ENCODE measurements at regions of chr18 and their contacts with region 1.

Region 1: GRCh38 chr18:74342416-74343043 is 26.9 kb downstream of the C18orf63 start:
- DNase-seq: no peak
- H3K4me3 Mint-ChIP-seq: no peak overlapping the region
- H3K27ac Mint-ChIP-seq: no peak overlapping the region
- H3K4me1 Mint-ChIP-seq: no peaks in the 10 kb centered on the region
- H3K27me3 Mint-ChIP-seq: peaks cover 18% of the 10 kb centered on the region

Region 2: DNA sequence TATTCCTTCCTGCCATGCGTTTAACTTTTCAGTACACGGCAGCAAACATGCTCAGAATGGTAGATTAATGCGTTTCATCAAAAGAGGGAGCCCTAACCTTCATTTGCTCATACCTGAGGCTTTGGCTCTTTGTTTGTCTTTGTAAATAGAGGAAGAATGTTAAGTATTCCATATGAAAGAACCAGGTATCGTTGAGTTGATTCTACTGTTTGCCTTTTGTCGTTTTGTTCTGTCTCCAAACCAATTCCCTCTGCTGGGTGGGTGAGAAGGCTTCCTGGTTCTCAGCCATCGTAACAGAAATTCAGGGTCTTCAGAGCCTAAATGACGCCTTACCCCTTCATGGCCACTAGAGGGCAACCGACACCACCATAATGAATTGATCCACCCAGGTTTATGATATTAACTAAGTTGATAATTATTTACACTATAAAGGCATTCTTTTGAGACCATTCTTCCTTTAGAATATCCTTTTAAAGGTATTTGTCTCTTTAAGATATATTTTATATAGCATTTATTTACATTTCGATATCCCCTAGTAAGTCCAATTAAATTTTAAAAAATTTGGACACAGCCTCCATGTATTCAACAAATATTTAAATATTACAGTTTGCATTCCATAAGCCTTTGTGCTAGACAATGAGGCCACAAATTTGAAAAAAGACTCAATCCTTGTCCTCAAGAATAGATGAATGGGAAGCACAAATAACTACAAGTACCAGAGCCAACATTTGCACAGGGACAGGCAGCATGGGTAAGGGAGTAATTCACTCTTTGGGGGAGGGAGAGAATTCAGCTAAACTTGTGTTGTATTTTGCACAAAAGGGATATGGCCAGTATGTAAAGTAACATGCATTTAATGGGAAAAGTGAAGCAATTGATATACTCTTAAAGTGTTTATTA is 146.1 kb before region 1 on chr18:
- intact Hi-C with region 1: loop called (anchors 1 kb)
- DNase-seq: peak; percentile 17
- H3K4me3 Mint-ChIP-seq: peak overlapping the region; percentile 68
- H3K27ac Mint-ChIP-seq: no peak overlapping the region
- H3K4me1 Mint-ChIP-seq: peaks cover 7% of the 10 kb centered on the region
- H3K27me3 Mint-ChIP-seq: peaks cover 5% of the 10 kb centered on the region

Region 3: DNA sequence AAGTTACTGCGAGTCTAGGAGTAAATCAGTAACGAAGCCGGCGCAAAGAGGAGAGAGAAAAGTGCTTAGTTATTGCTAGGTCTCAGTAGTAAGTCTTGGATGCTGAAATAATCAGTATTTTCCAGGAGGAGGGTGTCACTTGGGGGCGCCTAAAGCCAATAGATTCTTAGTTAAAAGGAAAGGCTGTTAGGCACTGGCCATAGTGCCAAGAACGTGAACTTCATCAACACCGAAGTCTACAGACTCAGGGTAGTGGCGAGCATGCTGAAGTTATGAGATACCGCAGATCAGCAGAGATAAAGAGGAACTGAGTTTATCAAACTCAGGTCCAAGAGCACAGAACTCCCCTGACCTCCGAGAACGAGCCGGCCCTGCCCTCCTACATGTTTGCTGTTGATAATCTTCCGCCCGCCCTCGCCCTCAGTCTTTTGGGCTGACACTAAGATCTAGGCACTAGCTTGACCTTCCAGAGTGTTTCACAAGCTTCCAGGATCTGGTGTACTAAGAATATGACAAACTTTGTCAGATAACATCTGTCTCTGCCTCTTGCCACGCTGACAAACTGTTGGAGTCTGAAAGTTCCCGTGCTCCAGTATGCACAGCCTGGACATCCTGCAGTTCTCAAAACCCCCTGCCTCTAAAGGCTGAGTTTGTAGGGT is 100.0 kb before region 1 on chr18:
- intact Hi-C with region 1: loop called (anchors 5 kb)
- DNase-seq: no peak
- H3K4me3 Mint-ChIP-seq: no peak overlapping the region
- H3K27ac Mint-ChIP-seq: no peak overlapping the region
- H3K4me1 Mint-ChIP-seq: peaks cover under 1% of the 10 kb centered on the region
- H3K27me3 Mint-ChIP-seq: peaks cover 11% of the 10 kb centered on the region

Region 4: DNA sequence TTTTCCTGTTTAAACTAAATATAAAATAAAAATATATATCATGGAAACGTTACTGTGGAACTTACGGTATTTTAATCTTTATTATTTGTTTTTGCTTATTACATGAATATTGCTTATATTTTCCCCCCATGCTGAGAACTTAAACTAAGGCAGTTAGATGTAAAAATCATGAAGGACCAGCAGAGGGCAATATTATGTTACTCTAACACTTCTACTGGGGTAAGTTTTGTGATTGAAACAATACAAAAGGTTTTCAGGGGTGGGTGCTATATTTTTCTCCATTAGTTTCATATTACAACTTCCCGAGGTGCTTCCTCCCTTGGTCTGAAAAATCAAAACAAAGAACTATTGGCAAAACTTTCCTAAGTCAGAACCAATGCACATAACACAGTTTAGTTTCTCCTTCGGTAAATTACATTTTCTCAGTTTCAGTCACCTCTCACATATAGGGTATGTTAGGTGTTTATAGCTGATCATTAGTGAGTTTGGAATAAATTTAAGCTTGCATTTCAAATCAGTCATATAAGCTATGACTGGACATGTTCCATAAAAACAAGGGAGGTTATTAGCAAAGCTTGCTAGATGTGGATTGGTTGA is 310.0 kb after region 1 on chr18:
- intact Hi-C with region 1: no loop called
- DNase-seq: no peak
- H3K4me3 Mint-ChIP-seq: no peak overlapping the region
- H3K27ac Mint-ChIP-seq: no peak overlapping the region
- H3K4me1 Mint-ChIP-seq: no peaks in the 10 kb centered on the region
- H3K27me3 Mint-ChIP-seq: no peaks in the 10 kb centered on the region

Measured in activated T-helper 1 cell treated with anti-CD3 and anti-CD28 coated beads, Interleukin-12 subunit alpha, Interleukin-12 subunit beta, Interleukin-2, Interleukin-4 antibody, amounts not matched to agents 30 ng/mL and 10 ng/mL and 1 ng/mL, durations not matched to agents 14 hours and 24 hours and 36 hours (primary cell).